Activated B cell treated with CpG ODN at 0.5 μM for 24 hours (primary cell): ENCODE measurements at regions of chr12 and their contacts with region 1.

Region 1: DNA sequence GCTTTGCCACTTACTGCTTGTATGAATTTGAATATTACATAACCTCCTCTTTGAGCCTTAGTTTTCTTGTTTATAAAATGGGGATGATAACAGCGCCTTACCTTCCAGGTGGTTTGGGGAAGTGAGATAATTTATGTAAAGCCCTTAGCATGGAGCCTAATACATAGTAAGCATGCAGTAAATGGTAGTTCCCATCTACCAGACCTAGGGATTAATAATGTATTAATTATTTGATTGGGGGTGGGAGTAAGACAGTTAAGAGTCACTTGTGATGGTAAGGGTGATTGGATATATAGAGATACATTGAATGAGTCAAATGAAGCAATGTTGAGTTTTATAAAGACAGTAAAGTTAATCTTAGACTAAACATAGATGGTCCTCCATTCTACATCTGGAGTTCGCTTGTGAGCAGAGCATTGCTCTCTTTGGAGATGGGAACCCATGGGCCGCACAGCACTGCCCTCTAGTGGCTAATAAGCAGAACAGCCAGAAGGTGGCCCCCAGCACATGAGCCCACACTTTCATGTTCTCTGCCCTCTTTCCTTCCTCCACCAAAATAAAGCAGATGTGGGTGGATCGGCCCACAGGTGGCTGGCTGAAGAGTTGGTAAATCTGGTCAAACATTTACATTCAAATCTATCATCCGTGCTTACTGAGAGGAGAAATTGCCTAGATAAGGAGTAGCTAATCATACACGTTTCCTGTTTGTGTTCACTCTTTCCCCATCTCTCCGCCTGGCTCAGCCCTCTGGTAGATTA is 26.5 kb upstream of the TAMALIN start:
- DNase-seq: peak; percentile 41
- ATAC-seq: peak; percentile 98
- H3K4me3 Mint-ChIP-seq: no peak overlapping the region
- H3K27ac Mint-ChIP-seq: no peak overlapping the region
- H3K4me1 Mint-ChIP-seq: peaks cover 11% of the 10 kb centered on the region
- H3K27me3 Mint-ChIP-seq: no peaks in the 10 kb centered on the region
- CTCF ChIP-seq: peak; percentile 76

Region 2: GRCh38 chr12:51823875-51824565 is 156.2 kb before region 1 on chr12:
- CTCF ChIA-PET with region 1: interaction called, 3 read pairs
- POLR2A ChIA-PET with region 1: no interaction called
- intact Hi-C with region 1: loop called (anchors 2 kb)
- DNase-seq: no peak
- ATAC-seq: no peak
- H3K4me3 Mint-ChIP-seq: no peak overlapping the region
- H3K27ac Mint-ChIP-seq: no peak overlapping the region
- H3K4me1 Mint-ChIP-seq: peaks cover 16% of the 10 kb centered on the region
- H3K27me3 Mint-ChIP-seq: peaks cover 21% of the 10 kb centered on the region
- CTCF ChIP-seq: no peak

Region 3: DNA sequence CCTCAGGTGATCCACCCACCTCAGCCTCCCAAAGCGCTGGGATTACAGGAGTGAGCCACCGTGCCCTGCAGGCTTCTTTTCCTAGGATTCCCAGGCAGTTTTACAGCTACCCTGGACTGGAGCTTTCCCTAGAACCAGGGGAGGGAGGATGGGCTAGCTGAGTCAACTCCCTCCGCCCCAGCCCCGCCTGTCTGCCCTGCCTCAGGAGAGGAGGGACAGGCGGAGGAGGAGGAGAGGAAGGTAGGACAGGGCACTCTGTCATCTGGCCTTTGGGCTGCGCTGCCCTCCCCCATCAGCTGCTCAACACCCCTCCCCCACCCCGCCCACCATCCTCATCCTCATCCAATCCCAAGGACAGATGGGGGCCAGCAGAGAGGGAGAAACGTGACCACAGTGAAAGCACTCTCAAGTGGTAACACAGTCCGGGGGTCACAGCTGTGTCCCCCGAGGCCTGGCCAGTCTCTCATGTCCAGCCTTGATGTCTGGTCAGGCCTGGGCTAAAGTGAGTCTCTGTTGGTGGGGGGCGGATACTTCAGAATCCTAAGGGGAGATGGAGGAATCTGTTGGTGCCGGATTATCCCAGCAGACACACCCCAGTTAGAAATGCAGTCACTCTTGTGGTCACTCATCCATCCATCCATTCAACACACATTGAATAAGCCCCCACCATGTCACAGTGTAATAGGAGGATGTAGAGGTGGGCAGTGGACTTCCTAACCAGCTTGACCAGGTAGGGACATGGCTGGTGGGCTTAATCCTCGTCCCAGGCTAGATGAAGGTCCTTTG is 144.0 kb before region 1 on chr12:
- CTCF ChIA-PET with region 1: no interaction called
- POLR2A ChIA-PET with region 1: no interaction called
- intact Hi-C with region 1: no loop called
- DNase-seq: no peak
- ATAC-seq: no peak
- H3K4me3 Mint-ChIP-seq: no peak overlapping the region
- H3K27ac Mint-ChIP-seq: no peak overlapping the region
- H3K4me1 Mint-ChIP-seq: peaks cover 11% of the 10 kb centered on the region
- H3K27me3 Mint-ChIP-seq: peaks cover 42% of the 10 kb centered on the region
- CTCF ChIP-seq: no peak

Region 4: DNA sequence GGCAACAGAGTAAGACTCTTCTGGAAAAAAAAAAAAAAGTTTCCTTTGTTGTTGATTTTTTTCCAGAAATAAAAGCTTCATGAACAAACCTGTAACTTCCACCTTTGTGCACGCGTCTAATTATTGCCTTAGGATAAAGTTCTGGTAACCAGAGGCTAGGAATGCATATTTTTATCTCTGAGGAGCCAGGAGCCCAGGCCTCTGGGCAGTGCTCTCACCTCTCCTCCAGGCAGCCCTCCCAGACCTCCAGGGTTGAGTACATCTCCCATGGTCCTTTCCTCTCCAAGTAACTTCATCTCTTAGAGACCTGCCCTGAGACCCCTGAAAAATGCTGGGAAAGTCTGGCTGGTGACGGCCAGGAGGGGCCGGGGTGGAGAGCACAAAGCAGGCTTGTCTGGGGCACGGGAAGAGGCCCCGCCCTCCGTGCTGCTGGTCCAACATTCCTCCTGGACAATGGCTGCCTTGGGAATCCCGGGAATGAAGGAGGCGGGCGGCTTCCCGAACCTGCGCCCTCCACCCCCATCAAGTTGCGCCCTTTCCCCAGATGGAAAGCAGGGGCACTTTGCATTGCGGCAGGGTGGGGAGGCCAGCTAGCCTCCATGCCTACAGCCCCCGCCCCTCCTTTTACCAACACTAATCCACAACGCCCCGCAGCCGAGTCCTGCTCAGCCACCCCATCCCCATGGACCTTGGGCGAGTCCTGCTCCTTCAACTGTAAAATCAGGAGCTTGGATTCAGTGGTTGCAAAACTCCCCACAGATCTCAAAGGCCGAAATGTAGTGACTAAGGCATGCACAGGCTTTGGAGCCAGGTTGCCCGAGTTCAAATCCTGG is 124.4 kb before region 1 on chr12:
- CTCF ChIA-PET with region 1: no interaction called
- POLR2A ChIA-PET with region 1: no interaction called
- intact Hi-C with region 1: no loop called
- DNase-seq: no peak
- ATAC-seq: no peak
- H3K4me3 Mint-ChIP-seq: no peak overlapping the region
- H3K27ac Mint-ChIP-seq: no peak overlapping the region
- H3K4me1 Mint-ChIP-seq: peaks cover 6% of the 10 kb centered on the region
- H3K27me3 Mint-ChIP-seq: peaks cover 41% of the 10 kb centered on the region
- CTCF ChIP-seq: no peak

Region 5: DNA sequence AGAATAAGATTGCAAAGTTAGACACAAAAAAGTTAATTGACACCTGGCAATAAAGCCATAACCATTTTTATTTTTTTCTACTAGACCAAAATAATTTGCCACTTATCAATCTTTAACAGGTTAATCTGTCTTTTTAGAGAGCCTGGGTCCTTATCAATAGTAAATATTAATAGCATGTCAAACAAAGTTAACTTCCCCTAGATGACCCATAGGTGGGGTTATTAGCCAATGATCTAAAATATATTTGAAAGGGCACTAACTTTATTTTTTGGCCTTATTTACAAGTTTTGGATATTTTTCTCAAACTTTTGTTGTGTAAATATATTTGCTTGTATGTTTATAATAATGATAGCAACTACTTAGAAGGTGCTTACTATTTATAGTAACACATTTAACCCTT is 88.4 kb before region 1 on chr12:
- CTCF ChIA-PET with region 1: interaction called, 4 read pairs
- POLR2A ChIA-PET with region 1: no interaction called
- intact Hi-C with region 1: loop called (anchors 1 kb)
- DNase-seq: no peak
- ATAC-seq: no peak
- H3K4me3 Mint-ChIP-seq: no peak overlapping the region
- H3K27ac Mint-ChIP-seq: no peak overlapping the region
- H3K4me1 Mint-ChIP-seq: peaks cover 3% of the 10 kb centered on the region
- H3K27me3 Mint-ChIP-seq: peaks cover 13% of the 10 kb centered on the region
- CTCF ChIP-seq: no peak

Region 6: GRCh38 chr12:51923501-51924271 is 56.5 kb before region 1 on chr12:
- CTCF ChIA-PET with region 1: interaction called, 6 read pairs
- POLR2A ChIA-PET with region 1: no interaction called
- intact Hi-C with region 1: loop called (anchors 1 kb)
- DNase-seq: peak; percentile 44
- ATAC-seq: peak; percentile 66
- H3K4me3 Mint-ChIP-seq: no peak overlapping the region
- H3K27ac Mint-ChIP-seq: no peak overlapping the region
- H3K4me1 Mint-ChIP-seq: peaks cover 32% of the 10 kb centered on the region
- H3K27me3 Mint-ChIP-seq: no peaks in the 10 kb centered on the region
- CTCF ChIP-seq: no peak

Region 7: GRCh38 chr12:51951199-51951842 is 28.9 kb before region 1 on chr12 and contains the start of gene ACVR1B:
- CTCF ChIA-PET with region 1: interaction called, 3 read pairs
- POLR2A ChIA-PET with region 1: no interaction called
- intact Hi-C with region 1: loop called (anchors 1 kb)
- DNase-seq: peak; percentile 74
- ATAC-seq: peak; percentile 95
- H3K4me3 Mint-ChIP-seq: peak within 1 kb of the TSS; percentile 93
- H3K27ac Mint-ChIP-seq: peak within 1 kb of the TSS; percentile 68
- H3K4me1 Mint-ChIP-seq: peaks cover 18% of the 10 kb centered on the region
- H3K27me3 Mint-ChIP-seq: peaks cover 15% of the 10 kb centered on the region
- CTCF ChIP-seq: no peak
- total RNA-seq, gene ACVR1B: 7.8 and 10.0 TPM in 2 replicates

Region 8: DNA sequence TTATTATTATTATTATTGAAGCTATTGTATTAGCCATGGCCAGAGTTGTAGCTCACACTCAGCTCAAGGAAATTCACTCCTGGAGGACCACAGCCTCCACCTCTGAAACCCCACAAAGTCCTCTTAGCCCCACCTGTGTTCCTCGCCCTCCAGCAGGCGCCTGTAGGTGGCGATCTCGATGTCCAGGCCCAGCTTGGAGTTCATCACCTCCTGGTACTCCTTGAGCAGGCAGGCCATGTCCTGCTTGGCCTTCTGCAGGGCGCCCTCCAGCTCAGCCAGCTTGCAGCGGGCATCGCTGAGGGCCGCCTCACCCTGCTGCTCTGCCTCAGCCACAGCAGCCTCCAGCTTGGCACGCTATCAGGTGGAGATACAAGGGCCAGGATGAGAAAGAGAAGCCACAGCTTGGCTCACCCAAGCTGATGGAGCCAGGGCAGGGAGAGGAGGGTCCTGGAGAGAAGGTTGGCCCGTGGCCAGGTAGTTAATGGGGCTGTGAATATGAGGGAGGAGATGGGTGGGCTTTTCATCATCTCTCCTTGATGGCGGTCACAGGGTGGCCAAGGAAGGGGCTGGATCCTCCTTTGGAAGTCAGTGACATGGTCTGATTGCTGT is 382.0 kb after region 1 on chr12:
- CTCF ChIA-PET with region 1: no interaction called
- POLR2A ChIA-PET with region 1: no interaction called
- intact Hi-C with region 1: no loop called
- DNase-seq: no peak
- ATAC-seq: no peak
- H3K4me3 Mint-ChIP-seq: no peak overlapping the region
- H3K27ac Mint-ChIP-seq: no peak overlapping the region
- H3K4me1 Mint-ChIP-seq: peaks cover 25% of the 10 kb centered on the region
- H3K27me3 Mint-ChIP-seq: peaks cover 4% of the 10 kb centered on the region
- CTCF ChIP-seq: no peak